ENCODE measurements at regions of chr22 and their contacts with region 1.

Region 1: GRCh38 chr22:33565580-33565995 is 354.7 kb downstream of the LARGE1 start:
- DNase-seq: no peak
- ATAC-seq: peak; percentile 30
- H3K4me3 ChIP-seq: no peak overlapping the region
- H3K27ac ChIP-seq: peak overlapping the region; percentile 64
- H3K4me1 ChIP-seq: peaks cover 46% of the 10 kb centered on the region
- H3K27me3 ChIP-seq: no peaks in the 10 kb centered on the region
- CTCF ChIP-seq: no peak
- EP300 ChIP-seq: no peak
- POLR2A ChIP-seq: no peak
- RAD21 ChIP-seq: no peak

Region 2: DNA sequence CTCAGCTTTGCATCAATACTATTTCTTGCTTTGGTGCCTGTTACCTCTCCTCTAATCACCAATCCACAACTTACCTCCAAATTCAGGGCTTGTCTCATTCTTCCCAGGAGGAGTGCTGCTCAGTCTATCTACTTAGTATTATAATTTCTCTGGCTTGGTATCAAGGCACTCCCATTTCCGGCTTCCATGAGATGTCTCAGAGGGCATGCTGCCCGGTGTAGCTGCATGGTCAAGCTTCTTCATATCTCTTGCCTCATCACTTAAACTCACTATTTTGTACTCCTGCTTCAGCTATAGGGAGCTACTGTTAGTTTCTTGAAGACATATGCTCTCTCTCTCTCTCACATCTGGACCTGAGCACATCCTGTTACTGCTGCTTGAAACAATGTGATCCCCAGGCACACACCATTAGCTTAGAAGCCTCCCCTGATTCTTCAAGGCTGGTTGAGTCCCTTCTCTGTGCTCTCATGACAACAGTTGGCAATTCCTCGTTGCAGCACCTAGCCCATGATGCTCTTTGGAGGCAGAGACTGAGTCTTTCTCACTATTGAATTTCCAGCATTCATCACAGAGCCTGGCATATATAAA is 324.6 kb before region 1 on chr22:
- CTCF ChIA-PET with region 1: no interaction called
- POLR2A ChIA-PET with region 1: no interaction called
- RAD21 ChIA-PET with region 1: no interaction called
- SMC1A ChIA-PET with region 1: no interaction called
- in situ Hi-C with region 1: no loop called
- intact Hi-C with region 1: loop called (anchors 5 kb)
- DNase-seq: no peak
- ATAC-seq: no peak
- H3K4me3 ChIP-seq: no peak overlapping the region
- H3K27ac ChIP-seq: no peak overlapping the region; the same call in 1 of the 2 replicates
- H3K4me1 ChIP-seq: peaks cover 25% of the 10 kb centered on the region
- H3K27me3 ChIP-seq: no peaks in the 10 kb centered on the region
- CTCF ChIP-seq: no peak
- EP300 ChIP-seq: no peak
- POLR2A ChIP-seq: no peak
- RAD21 ChIP-seq: no peak

Region 3: DNA sequence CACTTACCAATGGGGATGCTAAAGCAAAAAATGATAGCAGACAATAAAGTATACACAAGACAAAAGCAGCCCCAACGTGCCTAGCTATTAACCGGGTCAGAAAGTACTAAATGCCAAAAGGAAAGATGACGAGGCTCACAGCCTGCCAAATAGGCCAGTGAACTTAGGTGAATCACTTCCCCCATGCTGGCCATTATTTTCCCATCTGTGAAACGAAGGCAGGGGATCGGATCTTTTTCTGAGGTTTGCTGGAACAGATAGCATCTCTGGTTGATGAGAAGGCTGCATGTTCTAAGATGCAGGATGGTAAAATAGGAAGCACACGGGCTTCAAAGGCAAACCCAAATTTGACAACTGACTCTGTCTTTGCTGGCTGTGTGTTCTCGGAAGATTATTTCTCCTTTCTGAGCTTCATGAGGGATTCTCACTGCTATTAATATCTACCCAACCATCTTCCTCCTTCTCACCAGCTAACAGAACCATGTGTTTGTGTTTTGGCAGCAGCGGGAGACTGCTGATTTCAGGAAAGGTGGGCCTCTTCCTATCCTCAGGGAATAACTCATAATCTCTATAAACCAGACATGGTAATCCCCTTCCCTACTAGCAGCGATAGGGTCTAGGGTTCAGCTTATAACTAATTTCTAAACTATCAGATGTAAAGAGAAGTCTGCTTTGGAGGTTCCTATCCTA is 36.0 kb before region 1 on chr22:
- CTCF ChIA-PET with region 1: no interaction called
- POLR2A ChIA-PET with region 1: no interaction called
- RAD21 ChIA-PET with region 1: interaction called, 5 read pairs
- SMC1A ChIA-PET with region 1: interaction called, 11 read pairs
- in situ Hi-C with region 1: no loop called
- intact Hi-C with region 1: no loop called
- DNase-seq: no peak
- ATAC-seq: no peak
- H3K4me3 ChIP-seq: no peak overlapping the region
- H3K27ac ChIP-seq: no peak overlapping the region
- H3K4me1 ChIP-seq: no peaks in the 10 kb centered on the region
- H3K27me3 ChIP-seq: no peaks in the 10 kb centered on the region
- CTCF ChIP-seq: no peak
- EP300 ChIP-seq: no peak
- POLR2A ChIP-seq: no peak
- RAD21 ChIP-seq: no peak

Region 4: GRCh38 chr22:33579448-33580093 is 14.0 kb after region 1 on chr22:
- CTCF ChIA-PET with region 1: interaction called, 12 read pairs
- POLR2A ChIA-PET with region 1: no interaction called
- RAD21 ChIA-PET with region 1: interaction called, 8 read pairs
- SMC1A ChIA-PET with region 1: interaction called, 14 read pairs
- in situ Hi-C with region 1: no loop called
- intact Hi-C with region 1: no loop called
- DNase-seq: no peak
- ATAC-seq: peak; percentile 97
- H3K4me3 ChIP-seq: no peak overlapping the region
- H3K27ac ChIP-seq: no peak overlapping the region
- H3K4me1 ChIP-seq: peaks cover 3% of the 10 kb centered on the region; the same call in 1 of the 2 replicates
- H3K27me3 ChIP-seq: no peaks in the 10 kb centered on the region
- CTCF ChIP-seq: peak; percentile 86 to 98 (median 95)
- EP300 ChIP-seq: no peak
- POLR2A ChIP-seq: no peak
- RAD21 ChIP-seq: peak; percentile 95

Region 5: GRCh38 chr22:33652615-33653014 is 87.0 kb after region 1 on chr22:
- CTCF ChIA-PET with region 1: no interaction called
- POLR2A ChIA-PET with region 1: no interaction called
- RAD21 ChIA-PET with region 1: no interaction called
- SMC1A ChIA-PET with region 1: no interaction called
- in situ Hi-C with region 1: no loop called
- intact Hi-C with region 1: no loop called
- DNase-seq: no peak
- ATAC-seq: no peak
- H3K4me3 ChIP-seq: no peak overlapping the region
- H3K27ac ChIP-seq: no peak overlapping the region
- H3K4me1 ChIP-seq: no peaks in the 10 kb centered on the region
- H3K27me3 ChIP-seq: no peaks in the 10 kb centered on the region
- CTCF ChIP-seq: no peak
- EP300 ChIP-seq: no peak
- POLR2A ChIP-seq: no peak
- RAD21 ChIP-seq: no peak

Region 6: DNA sequence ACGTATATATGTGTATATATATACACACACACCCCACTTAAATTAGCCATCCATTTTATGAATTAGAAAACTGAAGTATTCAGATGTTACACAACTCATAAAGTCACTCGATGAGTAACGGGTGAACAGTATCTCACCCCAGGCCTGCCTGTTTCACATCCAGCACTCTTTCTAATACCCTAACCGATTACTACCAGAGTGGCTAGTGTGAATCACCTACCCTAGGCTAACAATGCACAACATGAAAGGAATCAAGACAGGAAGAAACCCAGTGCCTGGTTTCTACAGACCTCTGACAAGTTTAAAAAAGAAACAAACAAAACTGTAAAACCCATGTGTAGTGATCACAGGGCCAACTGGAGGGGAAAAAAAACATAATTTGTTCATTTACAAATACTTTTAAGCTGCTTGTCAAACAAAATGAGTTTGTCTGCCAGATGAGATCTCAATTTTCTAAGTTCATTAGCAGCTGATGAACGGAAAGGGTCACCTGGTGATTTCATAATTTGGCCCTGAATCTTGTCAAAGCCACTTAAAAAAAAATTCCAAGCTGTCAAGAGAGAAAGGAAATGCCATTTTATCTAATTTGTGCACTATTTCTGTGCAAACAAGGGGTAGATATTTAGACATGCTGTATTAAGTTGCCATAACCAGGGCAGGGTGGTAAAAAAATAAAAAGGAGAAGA is 219.8 kb after region 1 on chr22:
- CTCF ChIA-PET with region 1: no interaction called
- POLR2A ChIA-PET with region 1: no interaction called
- RAD21 ChIA-PET with region 1: no interaction called
- SMC1A ChIA-PET with region 1: no interaction called
- in situ Hi-C with region 1: no loop called
- intact Hi-C with region 1: no loop called
- DNase-seq: peak; percentile 24
- ATAC-seq: peak; percentile 69
- H3K4me3 ChIP-seq: no peak overlapping the region
- H3K27ac ChIP-seq: peak overlapping the region; percentile 43
- H3K4me1 ChIP-seq: peaks cover 10% of the 10 kb centered on the region; the same call in 1 of the 2 replicates
- H3K27me3 ChIP-seq: no peaks in the 10 kb centered on the region
- CTCF ChIP-seq: no peak
- EP300 ChIP-seq: no peak
- POLR2A ChIP-seq: no peak
- RAD21 ChIP-seq: no peak